ENCODE measurements at regions of chr7 and their contacts with region 1.

Region 1: GRCh38 chr7:121530227-121531174 is 134.4 kb upstream of the FAM3C start:
- DNase-seq: peak; percentile 96
- H3K4me3 ChIP-seq: no peak overlapping the region
- H3K27ac ChIP-seq: peak overlapping the region; percentile 61
- H3K4me1 ChIP-seq: peaks cover 28% of the 10 kb centered on the region
- H3K27me3 ChIP-seq: no peaks in the 10 kb centered on the region
- CTCF ChIP-seq: no peak

Region 2: DNA sequence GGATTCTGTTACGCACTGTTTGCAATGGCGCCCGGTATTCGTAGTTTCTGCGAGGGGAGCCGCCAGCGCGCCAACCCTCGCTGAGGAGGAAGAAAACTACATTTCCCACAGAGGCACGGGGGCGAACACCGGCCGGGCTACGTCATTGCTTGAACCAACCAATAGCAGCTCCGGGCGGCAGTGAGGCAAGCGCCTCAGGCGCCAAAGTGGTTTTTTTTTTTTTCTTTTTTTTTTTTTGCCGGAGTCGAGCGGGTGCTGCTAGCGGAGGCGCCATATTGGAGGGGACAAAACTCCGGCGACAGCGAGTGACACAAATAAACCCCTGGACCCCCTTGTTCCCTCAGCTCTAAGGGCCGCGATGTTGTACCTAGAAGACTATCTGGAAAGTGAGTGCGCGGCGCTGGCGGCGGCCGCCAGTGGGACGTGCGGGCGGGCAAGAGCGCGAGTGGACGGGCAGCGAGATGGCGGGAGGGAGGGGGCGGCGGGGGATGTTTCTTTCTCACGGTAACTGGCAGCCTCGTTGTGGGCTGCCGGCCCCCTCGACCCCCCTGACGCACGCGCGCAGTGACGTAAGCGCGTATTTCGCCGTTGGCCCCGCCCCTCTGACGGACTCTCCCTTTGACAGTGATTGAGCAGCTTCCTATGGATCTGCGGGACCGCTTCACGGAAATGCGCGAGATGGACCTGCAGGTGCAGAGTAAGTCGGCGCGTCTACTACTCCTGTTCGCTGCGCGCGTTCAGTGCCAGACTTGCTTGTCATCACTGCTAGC is 579.8 kb before region 1 on chr7 and contains the start of gene ING3:
- CTCF ChIA-PET with region 1: no interaction called
- POLR2A ChIA-PET with region 1: no interaction called
- intact Hi-C with region 1: loop called (anchors 5 kb)
- DNase-seq: peak; percentile 99
- H3K4me3 ChIP-seq: peak within 1 kb of the TSS; percentile 68
- H3K27ac ChIP-seq: peak within 1 kb of the TSS; percentile 100
- H3K4me1 ChIP-seq: peaks cover 6% of the 10 kb centered on the region
- H3K27me3 ChIP-seq: no peaks in the 10 kb centered on the region
- CTCF ChIP-seq: no peak
- total RNA-seq, gene ING3: 12.1 and 16.1 TPM in 2 replicates

Measured in A673 (cell line).